Activated CD4-positive, alpha-beta memory T cell treated with anti-CD3 and anti-CD28 coated beads, Interleukin-2, amount 10 ng/mL, durations not matched to agents 7 days and 5 days (primary cell): ENCODE measurements at regions of chr2 and their contacts with region 1.

Region 1: GRCh38 chr2:85282914-85283313 is 44.9 kb downstream of the TGOLN2 start:
- DNase-seq: no peak
- H3K4me3 Mint-ChIP-seq: no peak overlapping the region
- H3K27ac Mint-ChIP-seq: no peak overlapping the region
- H3K4me1 Mint-ChIP-seq: peaks cover 10% of the 10 kb centered on the region
- H3K27me3 Mint-ChIP-seq: peaks cover 8% of the 10 kb centered on the region

Region 2: GRCh38 chr2:85156619-85157018 is 126.3 kb before region 1 on chr2:
- CTCF ChIA-PET with region 1: no interaction called
- POLR2A ChIA-PET with region 1: no interaction called
- DNase-seq: no peak
- H3K4me3 Mint-ChIP-seq: no peak overlapping the region
- H3K27ac Mint-ChIP-seq: no peak overlapping the region
- H3K4me1 Mint-ChIP-seq: no peaks in the 10 kb centered on the region
- H3K27me3 Mint-ChIP-seq: peaks cover 6% of the 10 kb centered on the region

Region 3: DNA sequence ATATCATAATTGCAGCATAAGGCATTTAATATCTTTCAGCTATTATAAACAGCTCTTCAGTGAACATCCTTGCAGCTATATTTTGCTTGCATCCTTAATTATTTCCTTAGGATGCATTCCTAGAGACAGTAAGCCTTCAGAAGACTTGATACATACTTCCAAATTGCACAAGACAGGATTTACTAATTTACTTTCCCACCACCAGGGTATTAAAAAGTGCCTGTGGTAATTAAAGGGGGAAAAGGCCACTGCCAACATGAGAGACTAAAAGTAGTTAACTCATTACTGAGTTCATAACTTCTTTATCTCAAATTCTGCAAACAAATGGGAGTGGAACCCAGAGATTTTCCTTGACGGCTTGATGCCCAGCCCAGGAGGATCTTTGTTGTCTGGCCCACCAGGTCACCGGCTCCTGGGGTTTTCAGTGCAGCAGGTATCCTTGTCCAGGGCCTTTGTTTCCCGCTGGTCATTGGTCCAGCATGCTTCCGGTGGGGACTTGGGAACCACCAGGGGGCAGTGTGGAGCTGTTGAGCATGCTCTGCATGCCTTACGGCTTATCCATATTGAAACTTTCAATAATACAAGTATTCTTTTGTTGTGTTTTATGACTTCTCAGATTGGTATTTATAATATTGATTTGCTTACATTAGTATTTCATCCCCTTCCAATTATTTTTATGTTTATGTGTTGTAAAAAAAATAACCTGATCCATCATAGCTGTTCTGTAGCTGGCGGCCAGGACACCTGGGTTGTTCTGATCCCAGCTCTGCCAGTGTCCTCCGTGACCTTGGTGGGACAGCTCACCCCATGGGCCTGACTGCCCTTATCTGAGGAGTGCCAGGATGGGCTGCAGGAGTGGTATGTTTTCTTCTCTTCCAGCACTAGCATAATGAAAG is 16.5 kb before region 1 on chr2:
- CTCF ChIA-PET with region 1: interaction called, 23 read pairs
- POLR2A ChIA-PET with region 1: no interaction called
- DNase-seq: peak; percentile 73
- H3K4me3 Mint-ChIP-seq: no peak overlapping the region
- H3K27ac Mint-ChIP-seq: no peak overlapping the region
- H3K4me1 Mint-ChIP-seq: peaks cover 3% of the 10 kb centered on the region
- H3K27me3 Mint-ChIP-seq: peaks cover 19% of the 10 kb centered on the region

Region 4: GRCh38 chr2:85324639-85325465 is 41.9 kb after region 1 on chr2:
- CTCF ChIA-PET with region 1: no interaction called
- POLR2A ChIA-PET with region 1: no interaction called
- DNase-seq: no peak
- H3K4me3 Mint-ChIP-seq: peak overlapping the region; percentile 93
- H3K27ac Mint-ChIP-seq: peak overlapping the region; percentile 100
- H3K4me1 Mint-ChIP-seq: peaks cover 63% of the 10 kb centered on the region
- H3K27me3 Mint-ChIP-seq: no peaks in the 10 kb centered on the region